Activated naive CD4-positive, alpha-beta T cell treated with anti-CD3 and anti-CD28 coated beads for 36 hours (primary cell): ENCODE measurements at regions of chr5 and their contacts with region 1.

Region 1: GRCh38 chr5:154754460-154755360 is 467 bp upstream of the LARP1 start:
- DNase-seq: peak; percentile 99
- H3K4me3 Mint-ChIP-seq: peak overlapping the region; percentile 93
- H3K27ac Mint-ChIP-seq: peak overlapping the region; percentile 97
- H3K4me1 Mint-ChIP-seq: peaks cover 31% of the 10 kb centered on the region
- H3K27me3 Mint-ChIP-seq: no peaks in the 10 kb centered on the region

Region 2: GRCh38 chr5:154445422-154446182 is 309.1 kb before region 1 on chr5 and contains the start of gene SAP30L:
- CTCF ChIA-PET with region 1: no interaction called
- intact Hi-C with region 1: loop called (anchors 1 kb)
- DNase-seq: peak; percentile 94
- H3K4me3 Mint-ChIP-seq: peak within 1 kb of the TSS; percentile 98
- H3K27ac Mint-ChIP-seq: peak within 1 kb of the TSS; percentile 92
- H3K4me1 Mint-ChIP-seq: peaks cover 42% of the 10 kb centered on the region
- H3K27me3 Mint-ChIP-seq: no peaks in the 10 kb centered on the region
- total RNA-seq, gene SAP30L: 29.3 to 30.3 TPM

Region 3: GRCh38 chr5:154683101-154683880 is 71.4 kb before region 1 on chr5:
- CTCF ChIA-PET with region 1: no interaction called
- intact Hi-C with region 1: loop called (anchors 1 kb)
- DNase-seq: no peak
- H3K4me3 Mint-ChIP-seq: peak overlapping the region; percentile 59
- H3K27ac Mint-ChIP-seq: no peak overlapping the region
- H3K4me1 Mint-ChIP-seq: peaks cover 6% of the 10 kb centered on the region
- H3K27me3 Mint-ChIP-seq: peaks cover 2% of the 10 kb centered on the region

Region 4: GRCh38 chr5:154811653-154812365 is 57.1 kb after region 1 on chr5:
- CTCF ChIA-PET with region 1: interaction called, 5 read pairs
- intact Hi-C with region 1: loop called (anchors 1 kb)
- DNase-seq: peak; percentile 77
- H3K4me3 Mint-ChIP-seq: no peak overlapping the region
- H3K27ac Mint-ChIP-seq: peak overlapping the region; percentile 11
- H3K4me1 Mint-ChIP-seq: peaks cover 25% of the 10 kb centered on the region
- H3K27me3 Mint-ChIP-seq: no peaks in the 10 kb centered on the region

Region 5: GRCh38 chr5:154940772-154941620 is 186.3 kb after region 1 on chr5 and contains the start of gene MRPL22:
- CTCF ChIA-PET with region 1: no interaction called
- intact Hi-C with region 1: loop called (anchors 1 kb)
- DNase-seq: peak; percentile 97
- H3K4me3 Mint-ChIP-seq: peak within 1 kb of the TSS; percentile 97
- H3K27ac Mint-ChIP-seq: peak within 1 kb of the TSS; percentile 96
- H3K4me1 Mint-ChIP-seq: peaks cover 36% of the 10 kb centered on the region
- H3K27me3 Mint-ChIP-seq: no peaks in the 10 kb centered on the region
- total RNA-seq, gene MRPL22: 88.3 to 92.2 TPM